ENCODE measurements at regions of chr2 and their contacts with region 1.

Region 1: GRCh38 chr2:43219383-43220228 is 6.8 kb downstream of the ZFP36L2 start:
- DNase-seq: peak; percentile 93 to 97 (median 97)
- ATAC-seq: peak; percentile 76
- H3K4me3 ChIP-seq: peak overlapping the region; percentile 9
- H3K4me1 ChIP-seq: peaks cover 29% of the 10 kb centered on the region
- CTCF ChIP-seq: peak; percentile 5

Region 2: GRCh38 chr2:43158259-43158880 is 61.2 kb before region 1 on chr2:
- intact Hi-C with region 1: loop called in 1 of 2 experiments (anchors 5 kb)
- DNase-seq: peak; percentile 81 to 91 (median 84)
- ATAC-seq: peak; percentile 43
- H3K4me3 ChIP-seq: no peak overlapping the region
- H3K4me1 ChIP-seq: peaks cover 65% of the 10 kb centered on the region
- CTCF ChIP-seq: no peak

Region 3: DNA sequence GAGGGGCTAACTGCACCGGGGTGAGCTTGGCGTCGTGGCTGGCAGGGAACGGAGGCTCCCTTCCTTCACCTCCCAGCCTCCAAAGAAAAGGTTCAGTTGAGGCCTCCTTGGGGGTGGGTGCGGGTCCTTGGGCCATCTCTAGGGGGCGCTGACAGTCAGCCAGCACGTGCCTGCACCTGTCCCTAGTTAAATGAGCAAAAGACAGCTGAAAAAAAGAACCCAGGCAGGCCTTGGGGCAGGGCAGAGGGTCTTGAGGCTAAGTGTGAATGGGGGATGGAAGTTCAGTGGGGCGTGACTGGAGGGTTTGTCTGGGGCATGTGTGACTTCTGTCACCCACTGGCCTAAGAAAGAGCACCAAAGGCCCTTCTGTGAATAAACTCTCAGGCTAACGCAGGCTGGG is 49.6 kb before region 1 on chr2:
- intact Hi-C with region 1: loop called (anchors 2 to 5 kb)
- DNase-seq: peak; percentile 85 to 89 (median 85)
- ATAC-seq: peak; percentile 63
- H3K4me3 ChIP-seq: no peak overlapping the region
- H3K4me1 ChIP-seq: peaks cover 28% of the 10 kb centered on the region
- CTCF ChIP-seq: peak; percentile 81

Measured in mucosa of descending colon (tissue), 3 donors.